Adrenal gland (tissue), 19 donors: ENCODE measurements at regions of chr3 and their contacts with region 1.

Region 1: GRCh38 chr3:12484198-12484974 is at the start of gene TSEN2:
- DNase-seq: peak; percentile 93 to 97 (median 96)
- H3K4me3 ChIP-seq: peak within 1 kb of the TSS in 3 of 4 donors; percentile 63 to 87 (median 69)
- H3K27ac ChIP-seq: peak within 1 kb of the TSS in 4 of 5 donors; percentile 30 to 80 (median 64)
- H3K4me1 ChIP-seq: peaks cover 7 to 25% of the 10 kb centered on the region in 2 donors
- H3K27me3 ChIP-seq: no peaks in the 10 kb centered on the region
- CTCF ChIP-seq: peak in 5 of 6 experiments; percentile 30 to 43 (median 32)
- POLR2A ChIP-seq: peak; percentile 73 to 91
- total RNA-seq, gene TSEN2: 11.1 to 24.7 (median 18.5) TPM

Region 2: GRCh38 chr3:12135029-12135657 is 349.2 kb before region 1 on chr3:
- intact Hi-C with region 1: loop called (anchors 2 to 5 kb)
- DNase-seq: peak; percentile 63 to 89 (median 79)
- H3K4me3 ChIP-seq: no peak overlapping the region
- H3K27ac ChIP-seq: no peak overlapping the region
- H3K4me1 ChIP-seq: no peaks in the 10 kb centered on the region
- H3K27me3 ChIP-seq: no peaks in the 10 kb centered on the region
- CTCF ChIP-seq: peak; percentile 79 to 95 (median 86)
- POLR2A ChIP-seq: no peak

Region 3: DNA sequence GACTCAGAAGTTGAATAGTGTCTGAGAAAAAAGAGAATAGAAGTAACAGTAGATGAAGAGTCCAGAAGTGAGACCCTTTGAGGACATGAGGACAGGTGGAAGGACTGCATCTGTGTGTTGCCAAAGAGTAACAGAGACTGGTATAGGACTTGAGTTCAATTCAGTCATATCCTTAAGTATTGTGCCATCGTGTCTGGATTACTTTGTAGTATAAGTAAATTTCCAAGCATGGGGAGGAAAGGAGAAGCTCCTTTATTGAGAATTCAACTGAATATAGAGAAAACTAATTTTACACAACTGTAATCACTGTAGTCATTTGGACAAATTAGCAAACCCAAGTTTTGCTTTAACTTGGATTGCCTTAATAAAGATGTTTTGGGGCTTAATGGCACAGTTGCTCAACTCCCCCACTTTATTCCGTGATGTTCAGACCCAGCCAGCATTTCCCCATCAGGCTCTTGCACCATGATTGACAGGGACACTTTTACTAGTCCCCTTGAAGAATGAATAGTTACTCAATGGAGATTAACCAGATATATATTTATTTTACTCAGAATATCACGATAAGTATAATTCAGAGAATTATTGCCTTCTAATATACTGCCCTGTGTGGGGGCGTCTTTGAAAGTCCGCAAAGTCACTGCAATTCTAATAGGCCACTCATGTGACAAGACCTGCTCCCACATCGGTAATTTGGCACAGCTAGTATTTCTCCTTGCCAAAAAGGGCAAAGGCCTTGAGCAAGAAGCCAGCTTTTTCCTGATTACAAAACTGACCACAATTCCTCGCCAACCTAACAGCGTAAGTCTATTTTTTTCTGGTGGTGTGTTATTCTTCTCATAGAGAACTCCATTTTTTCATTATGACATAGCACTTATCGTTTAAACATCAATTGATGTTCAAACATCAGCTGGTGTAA is 134.2 kb before region 1 on chr3:
- intact Hi-C with region 1: no loop called
- DNase-seq: peak; percentile 37 to 80 (median 68)
- H3K4me3 ChIP-seq: peak overlapping the region in 1 of 4 donors; percentile 2
- H3K27ac ChIP-seq: peak overlapping the region in 2 of 5 donors; percentile 10 to 43
- H3K4me1 ChIP-seq: peaks cover 0 to 32% of the 10 kb centered on the region in 2 donors
- H3K27me3 ChIP-seq: no peaks in the 10 kb centered on the region
- CTCF ChIP-seq: no peak
- POLR2A ChIP-seq: no peak

Region 4: DNA sequence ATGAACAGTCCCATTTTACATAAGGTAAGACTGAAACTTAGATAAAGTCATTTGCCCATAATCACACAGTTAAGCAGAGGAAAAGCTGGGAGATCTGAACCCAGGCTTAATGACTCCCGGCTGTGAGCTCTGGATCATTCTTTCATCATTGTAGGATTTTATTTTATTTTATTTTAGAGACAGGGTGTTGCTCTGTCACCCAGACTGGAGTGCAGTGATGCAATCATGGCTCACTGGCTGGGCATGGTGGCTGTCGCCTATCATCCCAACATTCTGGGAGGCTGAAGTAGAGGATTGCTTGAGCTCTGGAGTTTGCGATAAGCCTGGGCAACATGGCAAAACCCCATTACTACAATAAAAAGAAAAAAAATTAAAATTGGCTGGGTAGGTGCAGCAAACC is 210.7 kb after region 1 on chr3:
- intact Hi-C with region 1: no loop called
- DNase-seq: no peak
- H3K4me3 ChIP-seq: no peak overlapping the region
- H3K27ac ChIP-seq: no peak overlapping the region
- H3K4me1 ChIP-seq: no peaks in the 10 kb centered on the region
- H3K27me3 ChIP-seq: no peaks in the 10 kb centered on the region
- CTCF ChIP-seq: no peak
- POLR2A ChIP-seq: no peak

Region 5: DNA sequence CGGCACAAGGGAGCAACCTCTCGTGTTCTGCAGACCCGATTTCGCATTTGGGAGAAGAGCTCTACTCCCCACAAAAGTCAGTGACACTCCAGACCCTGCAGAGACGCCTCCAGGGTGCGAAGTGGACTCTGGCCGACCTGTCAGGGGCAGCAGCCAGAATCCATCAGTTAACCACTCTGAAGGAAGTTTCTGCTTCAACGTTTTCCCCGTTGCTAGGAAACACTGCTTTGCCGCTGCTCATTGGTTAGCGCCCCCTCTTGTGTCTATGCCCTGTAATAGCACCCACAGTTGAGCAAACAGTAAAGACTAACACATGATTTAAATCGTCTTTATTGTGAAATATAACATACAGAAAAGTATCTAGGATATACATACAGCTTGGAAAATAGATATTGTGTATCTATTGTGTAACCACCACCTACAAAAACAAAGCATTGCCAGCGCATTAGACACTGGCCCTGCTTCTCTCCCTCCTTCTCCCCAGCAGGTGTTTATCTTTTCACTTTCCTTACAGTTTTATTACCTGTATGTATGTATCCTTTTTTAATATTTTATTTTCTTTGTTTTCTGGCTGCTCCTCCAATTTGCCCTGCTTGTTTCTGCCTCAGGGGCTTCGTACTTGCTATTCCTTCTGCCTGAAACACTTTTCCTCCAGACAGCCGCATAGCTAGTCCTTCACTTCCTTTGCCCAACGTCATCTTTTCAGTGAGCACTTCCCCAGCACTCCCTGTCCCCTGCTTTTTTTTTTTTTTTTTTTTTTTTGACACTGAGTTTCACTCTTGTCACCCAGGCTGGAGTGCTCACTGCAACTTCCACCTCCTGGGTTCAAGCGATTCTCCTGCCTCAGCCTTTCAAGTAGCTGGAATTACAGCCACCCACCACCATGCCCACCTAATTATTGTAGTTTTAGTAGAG is 235.9 kb after region 1 on chr3:
- intact Hi-C with region 1: loop called in 1 of 2 experiments (anchors 10 kb)
- DNase-seq: peak; percentile 67 to 90 (median 78)
- H3K4me3 ChIP-seq: peak overlapping the region in 1 of 4 donors; percentile 23
- H3K27ac ChIP-seq: no peak overlapping the region
- H3K4me1 ChIP-seq: peaks cover 0 to 8% of the 10 kb centered on the region in 2 donors
- H3K27me3 ChIP-seq: no peaks in the 10 kb centered on the region
- CTCF ChIP-seq: peak; percentile 82 to 91 (median 87)
- POLR2A ChIP-seq: no peak